CD4-positive, alpha-beta memory T cell (primary cell): ENCODE measurements at regions of chr1 and their contacts with region 1.

Region 1: DNA sequence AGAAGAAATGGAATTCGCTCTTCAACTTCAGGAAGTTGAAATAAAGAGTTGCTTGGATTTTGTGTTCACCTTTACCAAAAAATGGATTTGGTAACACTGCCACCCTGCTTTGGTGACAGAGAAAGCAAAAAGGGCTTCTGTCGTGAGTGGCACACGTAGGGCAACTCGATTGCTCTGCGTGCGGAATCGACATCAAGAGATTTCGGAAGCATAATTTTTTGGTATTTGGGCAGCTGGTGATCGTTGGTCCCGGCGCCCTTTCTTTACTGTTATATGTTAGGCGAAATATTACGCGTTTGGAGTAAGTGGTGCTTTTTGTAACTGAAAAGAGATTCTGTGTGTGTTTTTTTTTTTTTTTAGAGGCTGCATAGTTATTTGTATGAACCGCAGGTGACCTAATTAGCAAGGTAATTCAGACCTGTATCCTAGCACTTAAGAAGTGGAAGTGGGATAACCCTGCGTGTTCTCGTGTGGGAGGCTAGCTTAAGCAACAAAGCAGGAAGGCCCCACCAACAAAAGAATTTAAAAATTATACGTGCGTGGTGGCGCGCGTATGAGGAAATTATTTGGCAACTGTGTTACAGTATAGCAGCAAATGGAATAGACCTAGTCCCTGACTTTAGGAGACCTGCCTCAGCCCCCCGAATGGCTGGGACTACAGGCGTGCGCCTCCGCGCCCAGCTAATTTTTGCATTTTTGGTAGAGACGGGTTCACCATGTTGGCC is at the start of gene RNU11:
- DNase-seq: peak; percentile 93 to 95 (median 95)
- H3K4me3 ChIP-seq: peak within 1 kb of the TSS; percentile 55 to 91
- H3K4me3 Mint-ChIP-seq: peak within 1 kb of the TSS; percentile 84 to 94 (median 90)
- H3K27ac ChIP-seq: peak within 1 kb of the TSS; percentile 96
- H3K27ac Mint-ChIP-seq: peak within 1 kb of the TSS; percentile 99 to 100 (median 99)
- H3K4me1 ChIP-seq: peaks cover 31% of the 10 kb centered on the region
- H3K4me1 Mint-ChIP-seq: peaks cover 15 to 36% (median 25%) of the 10 kb centered on the region in 4 donors
- H3K27me3 ChIP-seq: no peaks in the 10 kb centered on the region
- H3K27me3 Mint-ChIP-seq: no peaks in the 10 kb centered on the region
- total RNA-seq, gene RNU11: not detected

Region 2: DNA sequence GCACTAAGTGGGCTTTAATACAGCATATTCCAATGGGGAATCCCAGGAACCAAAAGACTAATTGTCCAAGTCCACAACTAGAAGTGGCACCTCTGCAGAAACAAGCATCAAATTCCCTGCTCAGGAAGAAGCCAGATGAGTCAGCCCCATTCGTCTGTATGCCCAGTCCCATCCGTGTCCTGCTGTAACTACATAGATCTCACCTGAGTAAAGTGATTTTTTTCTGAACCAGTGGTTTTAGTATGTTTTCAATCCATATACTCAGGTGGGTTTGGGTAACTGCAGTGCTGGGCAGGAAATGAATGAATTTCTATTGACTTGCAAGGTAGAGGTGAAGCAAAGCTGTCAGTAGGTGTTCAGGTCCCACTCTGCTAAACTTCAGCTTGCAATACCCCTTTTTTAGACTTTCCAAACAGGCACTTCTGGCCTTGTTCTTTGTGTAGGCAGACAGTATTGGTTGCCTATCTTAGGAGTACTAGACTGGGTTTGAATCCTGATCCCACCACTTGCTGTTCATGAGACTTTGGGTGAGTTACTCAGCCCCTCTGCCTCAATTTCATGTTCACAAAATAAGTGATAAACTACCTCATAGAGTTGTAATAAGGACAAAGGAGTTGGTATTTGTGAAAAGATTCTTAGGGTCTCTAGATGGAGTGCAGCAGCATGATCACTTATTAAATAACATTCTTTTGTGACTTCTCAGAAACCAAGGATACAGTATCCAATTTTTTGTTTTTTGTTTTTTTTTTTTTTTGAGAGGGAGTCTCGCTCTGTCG is 137.8 kb before region 1 on chr1:
- CTCF ChIA-PET with region 1: interaction called, 3 read pairs
- POLR2A ChIA-PET with region 1: interaction called, 48 read pairs
- intact Hi-C with region 1: loop called (anchors 2 kb)
- DNase-seq: peak in 3 of 5 donors; percentile 27 to 44 (median 30)
- H3K4me3 ChIP-seq: peak overlapping the region in 1 of 2 donors; percentile 96
- H3K4me3 Mint-ChIP-seq: peak overlapping the region; percentile 94 to 100 (median 98)
- H3K27ac ChIP-seq: peak overlapping the region; percentile 66
- H3K27ac Mint-ChIP-seq: peak overlapping the region; percentile 85 to 99 (median 91)
- H3K4me1 ChIP-seq: peaks cover 67% of the 10 kb centered on the region
- H3K4me1 Mint-ChIP-seq: peaks cover 35 to 68% (median 47%) of the 10 kb centered on the region in 4 donors
- H3K27me3 ChIP-seq: no peaks in the 10 kb centered on the region
- H3K27me3 Mint-ChIP-seq: no peaks in the 10 kb centered on the region

Region 3: DNA sequence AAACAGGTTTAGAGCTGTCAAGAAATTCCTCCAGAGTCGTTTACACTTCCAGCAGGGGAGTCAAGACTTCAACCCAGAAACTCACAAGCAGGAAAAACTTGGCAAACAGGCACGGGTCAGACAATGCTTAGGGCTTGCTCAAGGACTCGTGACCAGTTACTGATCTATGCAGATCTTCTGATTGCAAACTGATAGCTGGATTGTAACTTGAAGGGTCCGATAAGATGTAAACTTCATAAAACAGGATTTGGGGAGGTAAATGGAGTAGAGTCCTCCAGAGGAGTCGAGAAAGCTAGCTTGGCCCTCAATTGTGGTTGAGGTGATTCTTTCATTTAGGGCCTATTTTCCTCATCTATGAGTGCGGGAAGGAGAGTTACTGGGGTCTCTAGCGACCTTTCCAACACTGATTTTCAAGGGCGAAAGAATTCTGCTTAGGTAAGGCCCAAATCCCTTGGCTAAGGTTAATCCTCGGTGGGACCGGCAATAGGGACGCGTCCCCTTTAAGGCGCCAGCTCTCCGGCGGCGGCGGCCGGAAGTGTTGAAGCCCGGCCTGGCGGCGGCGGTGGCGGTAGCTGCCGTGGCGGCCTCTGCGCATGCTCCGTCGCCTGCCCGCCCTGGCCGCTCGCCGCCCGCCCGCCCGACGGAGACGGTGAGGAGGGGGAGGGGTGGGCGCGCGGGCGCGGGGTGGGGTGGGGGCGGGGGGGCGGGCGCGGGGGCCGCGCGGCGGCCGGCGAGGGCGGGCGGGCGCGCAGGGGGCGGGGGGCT is 19.7 kb after region 1 on chr1 and contains the start of gene GMEB1:
- CTCF ChIA-PET with region 1: interaction called, 7 read pairs
- POLR2A ChIA-PET with region 1: interaction called, 202 read pairs
- intact Hi-C with region 1: loop called (anchors 1 kb)
- DNase-seq: peak; percentile 79 to 86 (median 84)
- H3K4me3 ChIP-seq: peak within 1 kb of the TSS; percentile 89 to 92
- H3K4me3 Mint-ChIP-seq: peak within 1 kb of the TSS; percentile 92 to 97 (median 93)
- H3K27ac ChIP-seq: peak within 1 kb of the TSS; percentile 88
- H3K27ac Mint-ChIP-seq: peak within 1 kb of the TSS; percentile 98 to 100 (median 98)
- H3K4me1 ChIP-seq: peaks cover 21% of the 10 kb centered on the region
- H3K4me1 Mint-ChIP-seq: peaks cover 13 to 26% (median 18%) of the 10 kb centered on the region in 4 donors
- H3K27me3 ChIP-seq: no peaks in the 10 kb centered on the region
- H3K27me3 Mint-ChIP-seq: no peaks in the 10 kb centered on the region
- total RNA-seq, gene GMEB1: 21.8 to 21.9 TPM

Region 4: GRCh38 chr1:28775121-28775944 is 126.7 kb after region 1 on chr1:
- CTCF ChIA-PET with region 1: interaction called, 4 read pairs
- POLR2A ChIA-PET with region 1: interaction called, 21 read pairs
- intact Hi-C with region 1: no loop called
- DNase-seq: peak; percentile 66 to 81 (median 74)
- H3K4me3 ChIP-seq: peak overlapping the region; percentile 8 to 64
- H3K4me3 Mint-ChIP-seq: peak overlapping the region; percentile 81 to 91 (median 85)
- H3K27ac ChIP-seq: peak overlapping the region; percentile 28
- H3K27ac Mint-ChIP-seq: peak overlapping the region; percentile 70 to 93 (median 87)
- H3K4me1 ChIP-seq: peaks cover 6% of the 10 kb centered on the region
- H3K4me1 Mint-ChIP-seq: peaks cover 5 to 13% (median 9%) of the 10 kb centered on the region in 4 donors
- H3K27me3 ChIP-seq: no peaks in the 10 kb centered on the region
- H3K27me3 Mint-ChIP-seq: no peaks in the 10 kb centered on the region